SK-N-SH (cell line): ENCODE measurements at regions of chr7 and their contacts with region 1.

Region 1: DNA sequence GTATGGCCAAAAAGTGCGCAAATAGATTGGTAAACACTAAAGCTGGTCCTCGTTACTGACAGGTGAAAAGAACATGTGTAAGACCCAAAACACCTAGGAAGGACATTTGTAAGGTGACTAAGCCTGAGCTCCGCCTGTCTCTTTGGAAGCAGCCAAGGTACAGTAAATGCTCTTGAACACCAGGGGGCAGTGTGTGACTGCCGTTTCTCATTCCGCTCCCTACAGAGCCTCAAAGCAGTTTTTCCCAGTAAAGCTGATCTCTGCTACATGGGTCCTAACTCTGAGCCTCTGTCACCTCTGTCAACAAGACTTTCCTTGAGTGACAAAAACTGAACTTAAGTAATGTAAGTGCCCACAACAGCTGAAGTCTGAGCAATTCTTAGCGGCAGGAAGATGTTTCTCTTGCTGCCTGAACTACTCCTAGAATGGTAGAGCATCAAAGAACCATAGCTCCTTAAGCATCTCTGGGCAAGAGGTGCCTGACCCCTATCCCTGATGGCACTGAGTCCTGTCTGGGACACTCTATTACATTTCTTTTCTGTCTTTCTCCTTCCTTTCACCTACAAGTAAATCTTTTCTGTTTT is 238.0 kb upstream of the INHBA start:
- DNase-seq: peak; percentile 73
- H3K4me3 ChIP-seq: no peak overlapping the region
- H3K27ac ChIP-seq: no peak overlapping the region
- H3K4me1 ChIP-seq: peaks cover 0 to 3% of the 10 kb centered on the region in 2 experiments; a peak in 1 of 4 replicates
- H3K27me3 ChIP-seq: no peaks in the 10 kb centered on the region
- CTCF ChIP-seq: peak; percentile 99
- EP300 ChIP-seq: no peak
- RAD21 ChIP-seq: peak; percentile 82

Region 2: GRCh38 chr7:41921453-41921981 is 19.3 kb before region 1 on chr7:
- CTCF ChIA-PET with region 1: interaction called, 20 read pairs
- POLR2A ChIA-PET with region 1: no interaction called
- DNase-seq: no peak
- H3K4me3 ChIP-seq: no peak overlapping the region
- H3K27ac ChIP-seq: peak overlapping the region; percentile 50 to 58; a peak in 3 of 4 replicates
- H3K4me1 ChIP-seq: peaks cover 2 to 26% of the 10 kb centered on the region in 2 experiments
- H3K27me3 ChIP-seq: no peaks in the 10 kb centered on the region
- CTCF ChIP-seq: no peak
- EP300 ChIP-seq: peak in 1 of 2 experiments; percentile 85; a peak in 2 of 4 replicates
- RAD21 ChIP-seq: no peak

Region 3: DNA sequence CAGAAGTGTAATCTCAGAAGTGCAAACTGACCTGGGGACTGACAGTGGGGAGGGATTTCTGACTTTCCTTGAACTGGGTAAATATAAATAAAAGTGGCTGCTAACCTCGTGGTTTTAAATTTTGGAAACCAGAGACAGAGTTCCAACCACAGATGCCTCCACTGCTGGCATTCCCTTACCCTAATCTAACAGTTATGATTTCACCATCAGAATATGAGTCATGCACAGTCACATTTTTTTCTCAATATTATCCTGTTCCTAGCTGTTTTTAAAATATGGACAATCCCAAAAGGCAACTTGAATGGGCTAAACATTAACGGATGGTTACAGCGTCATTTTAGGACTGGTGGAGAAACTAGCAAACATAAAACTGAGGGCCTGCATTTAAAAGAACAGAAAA is 26.3 kb after region 1 on chr7:
- CTCF ChIA-PET with region 1: interaction called, 47 read pairs
- POLR2A ChIA-PET with region 1: no interaction called
- DNase-seq: no peak
- H3K4me3 ChIP-seq: no peak overlapping the region
- H3K27ac ChIP-seq: no peak overlapping the region
- H3K4me1 ChIP-seq: no peaks in the 10 kb centered on the region
- H3K27me3 ChIP-seq: peaks cover 37% of the 10 kb centered on the region
- CTCF ChIP-seq: no peak
- EP300 ChIP-seq: no peak
- RAD21 ChIP-seq: no peak

Region 4: GRCh38 chr7:42025635-42026375 is 85.0 kb after region 1 on chr7:
- CTCF ChIA-PET with region 1: interaction called, 17 read pairs
- POLR2A ChIA-PET with region 1: no interaction called
- DNase-seq: no peak
- H3K4me3 ChIP-seq: no peak overlapping the region
- H3K27ac ChIP-seq: no peak overlapping the region
- H3K4me1 ChIP-seq: no peaks in the 10 kb centered on the region
- H3K27me3 ChIP-seq: peaks cover 90% of the 10 kb centered on the region
- CTCF ChIP-seq: peak; percentile 29
- EP300 ChIP-seq: no peak
- RAD21 ChIP-seq: peak; percentile 10; the same call in 1 of the 2 replicates

Region 5: GRCh38 chr7:42107484-42108245 is 166.8 kb after region 1 on chr7:
- CTCF ChIA-PET with region 1: no interaction called
- POLR2A ChIA-PET with region 1: no interaction called
- DNase-seq: no peak
- H3K4me3 ChIP-seq: no peak overlapping the region
- H3K27ac ChIP-seq: no peak overlapping the region
- H3K4me1 ChIP-seq: no peaks in the 10 kb centered on the region; a peak in 1 of 4 replicates
- H3K27me3 ChIP-seq: peaks cover 74% of the 10 kb centered on the region; the same call in 1 of the 2 replicates
- CTCF ChIP-seq: no peak
- EP300 ChIP-seq: no peak
- RAD21 ChIP-seq: no peak

Region 6: DNA sequence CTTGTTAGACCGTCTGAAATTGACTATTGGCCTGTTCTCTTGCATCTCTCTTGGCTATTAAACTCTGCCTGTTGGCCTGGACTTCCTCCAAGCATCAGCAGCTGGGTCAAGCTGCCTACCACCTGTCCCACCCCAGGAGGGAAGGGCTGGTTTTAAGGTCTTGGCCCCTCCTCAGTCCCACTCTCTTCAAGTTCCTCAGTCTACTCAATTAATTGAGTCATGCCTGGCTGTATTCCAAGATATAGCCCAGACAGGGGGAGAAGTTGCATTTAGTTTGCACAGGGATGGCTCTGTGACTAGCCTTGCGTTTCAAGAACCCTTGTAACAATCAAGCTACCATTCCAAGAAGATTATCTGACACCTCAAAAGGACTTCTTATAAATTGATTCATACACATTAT is 409.9 kb after region 1 on chr7:
- CTCF ChIA-PET with region 1: no interaction called
- POLR2A ChIA-PET with region 1: no interaction called
- DNase-seq: no peak
- H3K4me3 ChIP-seq: no peak overlapping the region
- H3K27ac ChIP-seq: no peak overlapping the region
- H3K4me1 ChIP-seq: no peaks in the 10 kb centered on the region; a peak in 1 of 4 replicates
- H3K27me3 ChIP-seq: peaks cover 9% of the 10 kb centered on the region; the same call in 1 of the 2 replicates
- CTCF ChIP-seq: no peak
- EP300 ChIP-seq: no peak
- RAD21 ChIP-seq: no peak

Region 7: DNA sequence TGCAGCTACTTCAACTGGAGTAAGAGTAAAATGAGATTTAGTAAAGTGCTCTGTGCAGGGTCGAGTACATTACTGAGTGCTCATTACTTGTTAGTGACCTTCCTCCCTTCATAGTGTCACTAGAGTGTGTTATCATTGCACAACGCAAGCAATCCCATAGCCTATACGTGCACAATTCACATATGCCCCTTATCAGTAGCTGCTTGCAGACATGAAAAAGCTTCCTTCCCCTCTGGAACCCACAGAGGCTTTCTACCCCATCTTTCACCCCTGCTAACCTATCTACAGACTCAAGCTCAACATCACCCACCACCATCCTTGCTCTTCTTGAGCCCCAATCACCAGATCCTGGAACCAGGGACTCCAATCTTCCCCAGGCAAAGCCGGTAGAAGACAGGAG is 911.7 kb after region 1 on chr7:
- CTCF ChIA-PET with region 1: interaction called, 15 read pairs
- POLR2A ChIA-PET with region 1: no interaction called
- DNase-seq: no peak
- H3K4me3 ChIP-seq: no peak overlapping the region
- H3K27ac ChIP-seq: no peak overlapping the region
- H3K4me1 ChIP-seq: peaks cover 0 to 4% of the 10 kb centered on the region in 2 experiments; a peak in 1 of 4 replicates
- H3K27me3 ChIP-seq: peaks cover 46% of the 10 kb centered on the region
- CTCF ChIP-seq: no peak
- EP300 ChIP-seq: no peak
- RAD21 ChIP-seq: no peak